ENCODE measurements at regions of chr11 and their contacts with region 1.

Region 1: GRCh38 chr11:87352759-87353707 is 315.3 kb downstream of the TMEM135 start:
- DNase-seq: peak; percentile 84 to 92
- ATAC-seq: peak; percentile 92 to 96 (median 94)
- H3K4me3 ChIP-seq: no peak overlapping the region
- H3K27ac ChIP-seq: no peak overlapping the region
- H3K4me1 ChIP-seq: peaks cover 16% of the 10 kb centered on the region
- H3K27me3 ChIP-seq: no peaks in the 10 kb centered on the region
- CTCF ChIP-seq: peak; percentile 100

Region 2: DNA sequence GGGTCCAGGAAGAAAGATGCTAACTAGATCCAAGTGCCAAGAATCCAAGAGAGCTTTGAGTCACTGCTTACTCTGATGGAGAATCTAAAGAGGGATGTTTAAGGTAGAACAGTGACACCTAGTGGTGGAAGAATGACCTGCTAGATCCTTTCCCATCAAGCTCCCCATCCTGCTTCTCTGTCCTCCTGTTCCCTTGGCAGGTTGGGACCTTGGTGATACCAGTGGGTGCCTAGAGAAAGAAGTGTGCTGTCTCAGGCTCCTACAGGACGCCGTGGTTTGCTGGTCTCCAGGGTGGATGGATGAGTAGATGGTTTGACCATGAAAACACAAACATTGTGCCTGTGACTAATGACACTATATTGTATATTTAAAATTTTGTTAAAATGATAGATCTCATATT is 68.4 kb after region 1 on chr11:
- intact Hi-C with region 1: loop called (anchors 2 kb)
- DNase-seq: no peak
- ATAC-seq: peak; percentile 75 to 92 (median 86)
- H3K4me3 ChIP-seq: no peak overlapping the region
- H3K27ac ChIP-seq: no peak overlapping the region
- H3K4me1 ChIP-seq: peaks cover 8% of the 10 kb centered on the region
- H3K27me3 ChIP-seq: no peaks in the 10 kb centered on the region
- CTCF ChIP-seq: peak; percentile 84

Region 3: GRCh38 chr11:88552377-88553062 is 1199.5 kb after region 1 on chr11:
- intact Hi-C with region 1: loop called (anchors 10 kb)
- DNase-seq: peak in 1 of 2 donors; percentile 18
- ATAC-seq: peak in 3 of 4 donors; percentile 48 to 59 (median 54)
- H3K4me3 ChIP-seq: no peak overlapping the region
- H3K27ac ChIP-seq: no peak overlapping the region
- H3K4me1 ChIP-seq: no peaks in the 10 kb centered on the region
- H3K27me3 ChIP-seq: peaks cover 0 to 4% (median 0%) of the 10 kb centered on the region in 3 donors
- CTCF ChIP-seq: peak; percentile 52

Region 4: GRCh38 chr11:89189776-89190175 is 1836.7 kb after region 1 on chr11:
- intact Hi-C with region 1: no loop called
- DNase-seq: no peak
- ATAC-seq: no peak
- H3K4me3 ChIP-seq: no peak overlapping the region
- H3K27ac ChIP-seq: no peak overlapping the region
- H3K4me1 ChIP-seq: no peaks in the 10 kb centered on the region
- H3K27me3 ChIP-seq: no peaks in the 10 kb centered on the region
- CTCF ChIP-seq: no peak